Gastrocnemius medialis (tissue), 4 donors: ENCODE measurements at regions of chr10 and their contacts with region 1.

Region 1: GRCh38 chr10:80504158-80504811 is 33.4 kb upstream of the SH2D4B start:
- DNase-seq: no peak
- ATAC-seq: no peak
- H3K4me3 ChIP-seq: no peak overlapping the region
- H3K27ac ChIP-seq: peak overlapping the region; percentile 7 to 84 (median 79)
- H3K4me1 ChIP-seq: peaks cover 43 to 71% of the 10 kb centered on the region in 2 donors
- H3K27me3 ChIP-seq: no peaks in the 10 kb centered on the region
- CTCF ChIP-seq: no peak
- POLR2A ChIP-seq: no peak

Region 2: GRCh38 chr10:80382989-80383388 is 121.3 kb before region 1 on chr10:
- in situ Hi-C with region 1: loop called in 2 of 4 experiments (anchors 10 kb)
- intact Hi-C with region 1: loop called (anchors 2 kb)
- DNase-seq: no peak
- ATAC-seq: no peak
- H3K4me3 ChIP-seq: no peak overlapping the region
- H3K27ac ChIP-seq: no peak overlapping the region
- H3K4me1 ChIP-seq: peaks cover 0 to 5% of the 10 kb centered on the region in 2 donors
- H3K27me3 ChIP-seq: no peaks in the 10 kb centered on the region
- CTCF ChIP-seq: peak; percentile 18 to 63 (median 49)
- POLR2A ChIP-seq: no peak

Region 3: DNA sequence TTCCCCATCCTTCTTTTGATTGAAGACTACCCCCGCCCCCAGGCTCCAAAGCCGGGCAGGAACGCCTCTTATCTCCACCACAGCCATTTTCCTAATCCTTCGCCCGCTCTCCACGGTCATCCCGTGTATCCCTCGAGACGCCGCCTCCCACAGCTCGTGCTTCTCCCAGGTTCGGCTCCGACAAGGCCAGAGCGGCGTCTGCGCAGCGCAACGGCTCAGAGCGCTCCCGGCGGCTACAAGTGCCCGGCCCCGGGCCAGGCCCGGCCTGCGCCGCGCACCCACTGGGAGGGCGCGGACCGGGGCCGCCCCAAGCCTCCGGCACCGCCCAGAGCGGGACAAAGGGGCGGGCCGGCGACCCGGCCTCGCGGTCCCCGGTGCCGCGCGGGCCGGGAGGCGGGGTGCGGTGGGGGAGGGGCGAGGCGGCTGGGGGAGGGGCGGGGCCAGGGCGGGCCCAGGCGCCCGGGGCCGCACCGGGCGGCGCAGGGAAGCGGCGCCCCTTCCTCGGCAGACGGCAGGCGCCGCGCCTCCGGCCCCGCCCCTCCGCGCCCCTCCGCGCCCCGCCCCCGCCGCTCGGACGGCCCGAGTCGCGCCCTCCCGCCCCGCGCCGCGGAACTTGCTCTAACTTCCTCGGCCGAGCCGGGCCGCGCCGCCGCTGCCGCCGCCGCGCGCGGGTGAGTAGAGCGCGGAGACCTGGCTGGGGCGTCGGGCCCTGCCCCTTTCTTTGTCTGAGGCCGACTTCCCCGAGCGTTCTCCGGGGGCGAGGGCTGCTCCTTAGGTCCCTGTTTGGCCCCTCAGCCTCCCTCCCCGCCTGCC is 50.4 kb before region 1 on chr10 and contains the start of gene TSPAN14:
- in situ Hi-C with region 1: loop called in 3 of 4 experiments (anchors 5 kb)
- intact Hi-C with region 1: loop called (anchors 2 kb)
- DNase-seq: peak; percentile 67 to 79
- ATAC-seq: peak; percentile 79 to 82
- H3K4me3 ChIP-seq: peak within 1 kb of the TSS; percentile 73 to 95 (median 86)
- H3K27ac ChIP-seq: peak within 1 kb of the TSS; percentile 94 to 96 (median 95)
- H3K4me1 ChIP-seq: peaks cover 23 to 30% of the 10 kb centered on the region in 2 donors
- H3K27me3 ChIP-seq: no peaks in the 10 kb centered on the region
- CTCF ChIP-seq: peak in 1 of 5 experiments; percentile 10
- POLR2A ChIP-seq: peak; percentile 55 to 68
- total RNA-seq, gene TSPAN14: 22.6 to 29.3 (median 26.9) TPM

Region 4: GRCh38 chr10:80976658-80977057 is 472.4 kb after region 1 on chr10:
- in situ Hi-C with region 1: no loop called
- intact Hi-C with region 1: no loop called
- DNase-seq: no peak
- ATAC-seq: no peak
- H3K4me3 ChIP-seq: no peak overlapping the region
- H3K27ac ChIP-seq: no peak overlapping the region
- H3K4me1 ChIP-seq: no peaks in the 10 kb centered on the region
- H3K27me3 ChIP-seq: no peaks in the 10 kb centered on the region
- CTCF ChIP-seq: no peak
- POLR2A ChIP-seq: no peak